Activated CD4-positive, alpha-beta T cell treated with anti-CD3 and anti-CD28 coated beads, Interleukin-2, amount 10 ng/mL, durations not matched to agents 24 days and 14 days (primary cell): ENCODE measurements at regions of chr9 and their contacts with region 1.

Region 1: DNA sequence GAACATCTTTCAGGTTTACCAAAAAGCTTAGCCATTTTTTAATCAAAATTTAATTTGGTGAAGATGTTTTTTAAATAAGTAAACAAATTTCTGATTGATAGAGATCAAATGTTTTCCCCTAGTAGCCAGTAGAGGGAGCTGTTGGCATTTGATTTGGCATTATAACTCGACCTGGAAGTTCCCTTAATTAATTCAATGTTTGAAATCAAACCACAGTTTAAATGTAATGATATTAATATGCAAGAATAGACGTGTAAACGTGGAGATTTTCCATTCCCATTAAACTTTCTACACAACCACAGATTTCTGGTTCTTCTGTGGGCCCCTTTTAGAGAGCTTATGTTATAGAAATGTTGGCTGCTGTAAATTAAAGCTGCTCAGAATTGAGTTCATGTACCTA is 148.1 kb upstream of the MPDZ start:
- DNase-seq: peak; percentile 56
- H3K4me3 Mint-ChIP-seq: no peak overlapping the region
- H3K27ac Mint-ChIP-seq: no peak overlapping the region
- H3K4me1 Mint-ChIP-seq: no peaks in the 10 kb centered on the region
- H3K27me3 Mint-ChIP-seq: no peaks in the 10 kb centered on the region

Region 2: GRCh38 chr9:14353222-14354056 is 925.9 kb after region 1 on chr9:
- intact Hi-C with region 1: loop called (anchors 1 kb)
- DNase-seq: peak; percentile 93
- H3K4me3 Mint-ChIP-seq: no peak overlapping the region
- H3K27ac Mint-ChIP-seq: no peak overlapping the region
- H3K4me1 Mint-ChIP-seq: peaks cover 5% of the 10 kb centered on the region
- H3K27me3 Mint-ChIP-seq: peaks cover 43% of the 10 kb centered on the region

Region 3: GRCh38 chr9:14428781-14429230 is 1001.2 kb after region 1 on chr9:
- intact Hi-C with region 1: loop called (anchors 5 kb)
- DNase-seq: peak; percentile 80
- H3K4me3 Mint-ChIP-seq: no peak overlapping the region
- H3K27ac Mint-ChIP-seq: no peak overlapping the region
- H3K4me1 Mint-ChIP-seq: no peaks in the 10 kb centered on the region
- H3K27me3 Mint-ChIP-seq: peaks cover 8% of the 10 kb centered on the region

Region 4: GRCh38 chr9:14768405-14769229 is 1341.0 kb after region 1 on chr9:
- intact Hi-C with region 1: loop called (anchors 5 kb)
- DNase-seq: peak; percentile 69
- H3K4me3 Mint-ChIP-seq: no peak overlapping the region
- H3K27ac Mint-ChIP-seq: no peak overlapping the region
- H3K4me1 Mint-ChIP-seq: no peaks in the 10 kb centered on the region
- H3K27me3 Mint-ChIP-seq: peaks cover 17% of the 10 kb centered on the region